ENCODE measurements at regions of chr12 and their contacts with region 1.

Region 1: DNA sequence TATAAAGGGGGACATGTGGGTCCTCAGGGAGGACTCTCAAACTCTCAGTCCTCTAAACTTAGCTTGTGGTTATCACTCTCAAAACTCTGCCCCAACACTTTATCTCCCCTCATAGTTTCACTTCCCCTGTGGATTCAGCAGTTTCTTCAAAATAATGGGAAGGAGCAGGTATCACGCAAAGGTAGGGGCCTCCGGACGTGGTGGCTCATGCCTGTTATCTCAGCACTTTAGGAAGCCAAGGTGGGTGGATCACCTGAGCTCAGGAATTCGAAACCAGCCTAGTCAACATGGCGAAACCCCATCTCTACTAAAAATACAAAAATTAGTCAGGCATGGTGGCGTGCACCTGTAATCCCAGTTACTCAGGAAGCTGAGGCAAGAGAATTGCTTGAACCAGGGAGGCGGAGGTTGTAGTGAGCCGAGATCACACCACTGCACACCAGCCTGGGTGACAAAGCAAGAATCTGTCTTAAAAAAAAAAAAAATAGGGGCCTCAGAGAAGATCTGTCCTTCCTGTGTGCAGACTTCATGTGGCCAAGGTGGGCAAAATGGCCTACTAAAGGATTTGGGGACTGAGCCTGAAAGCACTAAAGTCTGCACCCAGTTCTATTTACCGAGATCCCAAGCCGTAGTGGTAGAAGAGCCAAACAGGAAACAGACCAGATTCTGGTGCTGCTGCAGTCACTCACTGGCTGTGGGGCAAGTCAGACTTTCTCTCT is 6.4 kb downstream of the ITGB7 start:
- DNase-seq: no peak
- H3K4me3 Mint-ChIP-seq: peak overlapping the region; percentile 59
- H3K27ac Mint-ChIP-seq: peak overlapping the region; percentile 80
- H3K4me1 Mint-ChIP-seq: peaks cover 49% of the 10 kb centered on the region
- H3K27me3 Mint-ChIP-seq: no peaks in the 10 kb centered on the region

Region 2: DNA sequence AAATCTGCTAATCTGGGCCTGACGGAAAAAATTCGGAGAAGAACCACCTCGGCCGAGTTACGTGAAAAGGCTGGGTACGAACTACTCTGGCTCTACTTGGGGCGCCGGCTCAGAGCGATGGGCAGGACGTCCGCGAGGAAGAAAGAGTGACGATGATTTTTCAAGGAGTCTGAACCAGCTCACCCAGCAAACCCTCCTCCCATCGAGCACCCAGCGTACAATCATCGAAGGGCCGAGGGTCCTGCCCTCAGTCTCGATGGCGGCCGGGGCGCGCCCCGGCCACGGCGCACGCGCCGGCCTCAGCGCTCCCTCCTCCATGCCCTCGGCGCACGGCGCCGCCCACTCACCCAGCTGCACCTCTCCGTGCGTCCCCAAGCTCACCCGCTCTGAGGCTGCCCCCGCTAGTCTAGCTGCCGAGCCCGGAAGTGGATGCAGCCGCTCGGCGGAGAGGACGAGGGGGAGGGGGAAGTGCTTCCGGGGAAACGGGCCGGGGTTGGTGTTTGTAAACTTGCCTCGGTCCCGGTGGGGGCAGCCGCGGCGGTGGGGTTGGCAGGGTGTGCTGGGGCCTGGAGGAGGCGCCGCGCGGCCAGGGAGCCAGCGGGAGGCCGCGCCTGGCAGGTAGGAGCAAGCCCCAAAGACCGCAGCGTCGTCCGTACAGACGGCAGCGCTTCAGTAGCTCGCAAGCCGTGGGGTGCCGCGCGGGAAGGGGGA is 20.2 kb before region 1 on chr12 and contains the starts of genes CSAD and ZNF740:
- intact Hi-C with region 1: loop called (anchors 2 kb)
- DNase-seq: peak; percentile 97
- H3K4me3 Mint-ChIP-seq: peak within 1 kb of the TSS; percentile 91
- H3K27ac Mint-ChIP-seq: peak within 1 kb of the TSS; percentile 94
- H3K4me1 Mint-ChIP-seq: peaks cover 40% of the 10 kb centered on the region
- H3K27me3 Mint-ChIP-seq: no peaks in the 10 kb centered on the region
- total RNA-seq, gene CSAD: 20.2 TPM in 2 replicates
- total RNA-seq, gene ZNF740: 44.9 and 45.5 TPM in 2 replicates

Region 3: DNA sequence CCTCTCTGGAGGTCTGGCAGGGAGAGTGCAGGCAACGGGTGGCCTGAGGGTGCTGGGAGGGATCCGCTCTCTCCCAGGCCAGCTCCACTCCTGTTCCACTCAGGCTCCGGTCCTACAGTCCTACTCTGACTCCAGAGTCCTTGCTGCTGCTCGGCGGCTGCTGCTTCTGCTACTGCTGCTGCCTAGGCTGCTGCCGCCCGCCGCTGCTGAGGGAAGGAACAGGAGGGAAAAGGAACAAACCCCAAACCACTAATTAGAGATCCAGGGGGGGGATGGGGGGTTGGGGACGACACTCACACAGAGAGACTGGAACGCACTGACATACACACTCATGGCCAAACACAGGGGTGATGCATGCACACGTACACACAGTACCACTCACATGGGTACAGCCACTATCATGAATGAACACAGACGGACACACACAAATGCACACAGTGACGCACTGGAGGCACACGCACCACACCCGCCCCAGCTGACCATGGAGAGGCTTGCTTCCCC is 135.6 kb after region 1 on chr12 and contains the start of gene SP7:
- intact Hi-C with region 1: no loop called
- DNase-seq: no peak
- H3K4me3 Mint-ChIP-seq: no peak within 1 kb of the TSS
- H3K27ac Mint-ChIP-seq: no peak within 1 kb of the TSS
- H3K4me1 Mint-ChIP-seq: peaks cover 9% of the 10 kb centered on the region
- H3K27me3 Mint-ChIP-seq: peaks cover 46% of the 10 kb centered on the region
- total RNA-seq, gene SP7: 0.11 TPM in 1 of 2 replicates, not detected in the other